Mucosa of descending colon (tissue), 3 donors: ENCODE measurements at regions of chr1 and their contacts with region 1.

Region 1: DNA sequence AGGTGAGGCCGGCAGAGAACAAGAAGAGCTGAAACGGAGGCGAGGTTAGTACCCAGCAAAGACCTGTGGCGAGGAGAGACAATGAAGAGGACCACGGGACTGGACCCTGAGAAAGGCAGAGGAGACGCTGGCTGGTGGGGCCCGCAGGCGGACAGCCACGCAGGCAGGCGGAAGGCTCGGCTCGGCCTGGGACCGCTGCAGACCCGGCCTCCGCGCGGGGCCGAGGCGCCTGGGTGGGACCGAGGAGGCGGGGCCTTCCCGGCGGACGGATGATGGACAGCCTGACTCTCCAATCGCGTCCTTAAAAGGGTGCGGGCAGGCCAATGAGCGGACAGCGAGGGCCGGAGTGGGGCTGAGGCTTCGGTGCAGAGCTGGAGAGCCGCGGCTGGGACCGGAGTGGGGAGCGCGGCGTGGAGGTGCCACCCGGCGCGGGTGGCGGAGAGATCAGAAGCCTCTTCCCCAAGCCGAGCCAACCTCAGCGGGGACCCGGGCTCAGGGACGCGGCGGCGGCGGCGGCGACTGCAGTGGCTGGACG is at the start of gene MPZL1:
- DNase-seq: peak; percentile 95 to 99 (median 98)
- ATAC-seq: peak; percentile 97
- H3K4me3 ChIP-seq: peak within 1 kb of the TSS; percentile 95
- H3K4me1 ChIP-seq: peaks cover 14% of the 10 kb centered on the region
- CTCF ChIP-seq: no peak
- total RNA-seq, gene MPZL1: 95.6 to 117 (median 103) TPM

Region 2: DNA sequence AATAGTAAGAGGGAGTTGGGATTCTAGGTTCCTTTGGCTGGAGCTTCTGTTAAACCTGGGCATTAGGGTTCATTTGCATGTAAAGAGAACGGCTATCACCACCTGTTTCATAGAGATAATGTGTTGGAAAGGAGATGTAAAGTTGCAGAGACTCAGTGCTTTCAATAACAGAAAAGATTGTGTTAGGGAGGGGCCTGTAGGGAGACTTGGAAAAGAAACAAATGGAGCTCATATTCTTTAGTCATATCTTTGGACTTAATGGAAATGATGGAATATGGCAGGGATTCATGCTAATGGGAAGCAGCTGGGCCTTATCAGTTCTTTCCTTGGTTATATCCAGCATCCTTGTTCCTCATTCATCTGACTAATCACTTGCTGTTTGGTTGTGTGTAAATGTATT is 348.3 kb before region 1 on chr1:
- intact Hi-C with region 1: no loop called
- DNase-seq: peak in 1 of 3 donors; percentile 5
- ATAC-seq: no peak
- H3K4me3 ChIP-seq: no peak overlapping the region
- H3K4me1 ChIP-seq: no peaks in the 10 kb centered on the region
- CTCF ChIP-seq: no peak

Region 3: DNA sequence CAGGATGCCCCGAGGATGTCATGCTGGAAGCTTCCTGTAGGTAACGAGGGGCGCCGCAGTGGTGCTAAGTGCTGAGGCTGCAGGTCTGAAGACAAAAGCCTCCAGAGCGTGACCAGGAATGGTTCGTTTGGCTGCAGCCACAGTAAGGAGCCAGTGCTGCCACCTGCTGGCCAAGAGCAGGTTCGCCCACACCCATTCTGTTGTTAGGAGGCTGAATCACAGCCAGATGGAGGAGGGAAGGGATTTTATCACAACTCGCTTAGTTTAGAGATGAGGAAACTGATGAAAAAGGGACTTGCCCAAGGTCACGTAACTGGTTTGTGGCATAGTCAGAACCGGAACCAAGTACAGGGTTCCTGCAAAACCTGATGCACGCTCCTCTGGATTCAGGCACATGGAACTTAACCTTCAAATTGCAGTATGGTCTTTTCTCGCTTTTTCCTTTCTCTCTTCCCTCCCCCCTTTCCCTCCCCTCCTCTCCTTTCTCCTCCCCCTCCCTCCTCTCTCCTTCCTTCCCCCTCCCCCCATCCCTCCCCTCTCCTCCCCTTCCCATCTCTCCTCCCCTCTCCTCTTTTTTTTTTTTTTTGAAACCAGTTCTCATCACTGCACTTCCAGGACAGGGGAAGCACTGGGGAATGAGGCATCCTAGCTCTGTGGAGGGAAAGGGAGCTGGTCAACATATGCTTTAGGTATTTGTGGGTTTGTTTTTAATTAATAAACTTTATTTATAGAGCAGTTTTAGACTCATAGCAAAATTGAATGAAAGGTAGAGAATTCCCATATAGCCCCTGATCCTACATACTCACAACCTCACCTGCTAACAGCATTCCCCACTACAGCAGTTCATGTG is 81.9 kb after region 1 on chr1:
- intact Hi-C with region 1: loop called (anchors 10 kb)
- DNase-seq: peak; percentile 92 to 96 (median 93)
- ATAC-seq: peak; percentile 99
- H3K4me3 ChIP-seq: no peak overlapping the region
- H3K4me1 ChIP-seq: peaks cover 7% of the 10 kb centered on the region
- CTCF ChIP-seq: peak; percentile 94